ENCODE measurements at regions of chr17 and their contacts with region 1.

Region 1: GRCh38 chr17:73311781-73312641 is at the start of gene CDC42EP4:
- DNase-seq: peak; percentile 76
- ATAC-seq: peak; percentile 91
- H3K4me3 Mint-ChIP-seq: peak within 1 kb of the TSS; percentile 84
- H3K27ac Mint-ChIP-seq: no peak within 1 kb of the TSS
- H3K4me1 Mint-ChIP-seq: peaks cover 19% of the 10 kb centered on the region
- H3K27me3 Mint-ChIP-seq: no peaks in the 10 kb centered on the region
- CTCF ChIP-seq: no peak
- total RNA-seq, gene CDC42EP4: 0.61 and 0.95 TPM in 2 replicates

Region 2: DNA sequence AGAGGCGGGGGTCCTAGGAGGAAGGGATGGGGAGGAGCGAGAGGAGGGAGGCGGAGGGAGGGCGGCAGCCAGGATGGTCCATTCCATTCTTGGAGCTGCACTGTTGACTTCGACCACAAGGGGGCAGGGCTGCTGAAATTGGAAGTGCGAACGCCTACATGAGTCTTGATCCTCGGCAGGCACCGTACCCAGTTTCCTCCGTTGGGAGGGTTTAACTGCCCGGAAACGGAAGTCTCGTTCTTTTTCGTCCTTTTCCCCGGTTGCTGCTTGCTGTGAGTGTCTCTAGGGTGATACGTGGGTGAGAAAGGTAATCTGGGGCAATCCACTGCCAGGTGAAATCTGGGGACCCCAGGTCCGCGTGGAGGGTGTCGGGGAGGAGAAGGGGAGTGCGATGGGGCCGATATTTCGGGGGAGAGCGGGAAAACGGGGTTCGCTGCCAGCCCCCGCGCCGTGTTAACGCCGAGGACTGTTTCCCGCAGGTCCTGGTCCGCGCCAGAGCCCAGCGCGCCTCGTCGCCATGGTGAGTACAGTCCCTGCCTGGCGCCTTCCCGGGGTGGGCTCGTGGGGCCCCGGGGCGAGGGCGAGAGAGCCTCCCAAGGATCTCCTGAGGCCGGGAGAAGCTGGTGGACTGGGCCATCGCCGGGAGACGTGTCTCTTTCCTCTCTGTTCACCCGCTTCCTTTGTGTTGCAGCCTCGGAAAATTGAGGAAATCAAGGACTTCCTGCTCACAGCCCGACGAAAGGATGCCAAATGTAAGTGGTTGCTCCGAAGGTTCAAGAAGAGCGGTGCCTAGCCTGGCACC is 891.6 kb after region 1 on chr17 and contains the start of gene RPL38:
- CTCF ChIA-PET with region 1: no interaction called
- POLR2A ChIA-PET with region 1: no interaction called
- intact Hi-C with region 1: loop called (anchors 10 kb)
- DNase-seq: peak; percentile 90
- ATAC-seq: peak; percentile 94
- H3K4me3 Mint-ChIP-seq: peak within 1 kb of the TSS; percentile 100
- H3K27ac Mint-ChIP-seq: peak within 1 kb of the TSS; percentile 98
- H3K4me1 Mint-ChIP-seq: peaks cover 47% of the 10 kb centered on the region
- H3K27me3 Mint-ChIP-seq: peaks cover 23% of the 10 kb centered on the region
- CTCF ChIP-seq: no peak
- total RNA-seq, gene RPL38: 1,330 and 1,676 TPM in 2 replicates